ENCODE measurements at regions of chr15 and their contacts with region 1.

Region 1: DNA sequence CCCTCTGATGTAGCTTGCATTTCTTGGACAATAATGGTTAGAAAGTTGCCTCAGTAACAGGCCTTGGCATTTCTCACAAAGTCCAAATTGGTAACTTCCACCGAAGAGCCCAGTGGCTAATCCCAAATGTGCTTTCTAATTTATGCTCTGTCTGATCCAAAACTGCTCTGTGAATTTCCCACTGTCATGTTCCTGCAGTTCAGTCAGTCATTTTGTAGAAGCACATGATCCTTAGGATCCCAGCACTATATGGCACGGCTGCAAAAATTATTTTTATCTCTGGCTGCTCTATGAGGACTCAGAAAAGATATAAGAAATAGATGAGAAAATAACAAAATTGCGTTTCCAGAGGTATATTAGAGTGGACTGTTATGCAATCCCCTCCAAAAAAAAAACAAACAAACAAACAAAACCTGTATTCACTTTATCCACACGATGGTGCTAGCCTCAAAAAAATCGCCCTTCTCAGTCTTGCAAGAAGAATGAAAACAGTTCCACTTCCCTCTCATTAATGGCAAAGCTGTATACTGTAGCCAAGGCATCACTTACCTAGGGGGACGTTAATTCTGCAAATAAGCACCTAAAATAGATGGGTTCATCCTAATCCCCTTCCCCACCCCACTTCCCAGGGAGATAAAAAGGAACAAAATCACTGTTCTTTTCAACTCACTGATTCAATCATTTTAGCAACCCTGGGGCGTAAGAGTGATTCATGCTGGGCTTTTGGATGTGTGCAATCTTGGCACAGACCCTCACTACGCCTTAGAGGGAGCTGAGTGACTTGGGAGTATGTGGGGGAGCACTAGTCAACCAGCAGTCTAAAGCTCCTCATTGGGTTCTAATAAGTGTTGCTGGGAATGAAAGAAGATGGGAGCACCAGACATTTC is 61.3 kb downstream of the TMCO5A start:
- DNase-seq: peak; percentile 82
- H3K4me3 Mint-ChIP-seq: no peak overlapping the region
- H3K27ac Mint-ChIP-seq: no peak overlapping the region
- H3K4me1 Mint-ChIP-seq: peaks cover 13% of the 10 kb centered on the region
- H3K27me3 Mint-ChIP-seq: peaks cover 26% of the 10 kb centered on the region
- CTCF ChIP-seq: peak; percentile 73

Region 2: GRCh38 chr15:37981775-37982174 is 13.9 kb before region 1 on chr15:
- CTCF ChIA-PET with region 1: interaction called, 34 read pairs
- POLR2A ChIA-PET with region 1: no interaction called
- intact Hi-C with region 1: no loop called
- DNase-seq: peak; percentile 47
- H3K4me3 Mint-ChIP-seq: no peak overlapping the region
- H3K27ac Mint-ChIP-seq: no peak overlapping the region
- H3K4me1 Mint-ChIP-seq: no peaks in the 10 kb centered on the region
- H3K27me3 Mint-ChIP-seq: no peaks in the 10 kb centered on the region
- CTCF ChIP-seq: peak; percentile 20

Region 3: GRCh38 chr15:38012894-38013293 is 17.2 kb after region 1 on chr15:
- CTCF ChIA-PET with region 1: interaction called, 10 read pairs
- POLR2A ChIA-PET with region 1: no interaction called
- intact Hi-C with region 1: no loop called
- DNase-seq: no peak
- H3K4me3 Mint-ChIP-seq: no peak overlapping the region
- H3K27ac Mint-ChIP-seq: no peak overlapping the region
- H3K4me1 Mint-ChIP-seq: no peaks in the 10 kb centered on the region
- H3K27me3 Mint-ChIP-seq: no peaks in the 10 kb centered on the region
- CTCF ChIP-seq: no peak

Region 4: DNA sequence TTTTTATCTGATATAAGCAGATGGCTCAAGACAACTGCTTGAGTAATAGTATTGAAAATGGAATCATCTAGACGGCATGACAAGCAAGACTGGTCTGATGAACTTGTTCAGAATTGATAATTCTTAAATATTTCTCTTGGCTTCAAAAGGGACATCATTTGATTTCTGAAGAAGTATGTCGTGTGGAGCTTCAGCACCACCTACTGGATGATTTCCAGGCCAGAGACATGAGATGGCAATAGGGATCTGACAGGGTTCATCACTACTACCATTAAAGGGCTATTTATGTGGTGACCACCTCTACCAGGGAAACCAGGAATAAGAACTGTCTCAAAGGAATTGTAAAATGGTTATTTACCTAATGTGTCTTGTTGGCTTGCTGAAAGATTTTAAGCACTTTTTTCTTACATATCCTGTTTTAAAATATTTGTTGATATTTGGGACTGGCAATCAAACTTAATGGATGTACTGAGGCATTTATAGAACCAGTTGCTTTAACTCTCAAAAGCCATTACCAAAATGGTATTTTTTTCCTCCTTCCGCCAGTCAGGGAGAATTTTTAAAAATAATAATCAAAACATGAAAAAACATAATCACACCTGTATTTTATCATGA is 358.7 kb after region 1 on chr15:
- CTCF ChIA-PET with region 1: interaction called, 51 read pairs
- POLR2A ChIA-PET with region 1: interaction called, 7 read pairs
- intact Hi-C with region 1: loop called (anchors 1 kb)
- DNase-seq: peak; percentile 78
- H3K4me3 Mint-ChIP-seq: no peak overlapping the region
- H3K27ac Mint-ChIP-seq: no peak overlapping the region
- H3K4me1 Mint-ChIP-seq: no peaks in the 10 kb centered on the region
- H3K27me3 Mint-ChIP-seq: no peaks in the 10 kb centered on the region
- CTCF ChIP-seq: peak; percentile 63

Region 5: DNA sequence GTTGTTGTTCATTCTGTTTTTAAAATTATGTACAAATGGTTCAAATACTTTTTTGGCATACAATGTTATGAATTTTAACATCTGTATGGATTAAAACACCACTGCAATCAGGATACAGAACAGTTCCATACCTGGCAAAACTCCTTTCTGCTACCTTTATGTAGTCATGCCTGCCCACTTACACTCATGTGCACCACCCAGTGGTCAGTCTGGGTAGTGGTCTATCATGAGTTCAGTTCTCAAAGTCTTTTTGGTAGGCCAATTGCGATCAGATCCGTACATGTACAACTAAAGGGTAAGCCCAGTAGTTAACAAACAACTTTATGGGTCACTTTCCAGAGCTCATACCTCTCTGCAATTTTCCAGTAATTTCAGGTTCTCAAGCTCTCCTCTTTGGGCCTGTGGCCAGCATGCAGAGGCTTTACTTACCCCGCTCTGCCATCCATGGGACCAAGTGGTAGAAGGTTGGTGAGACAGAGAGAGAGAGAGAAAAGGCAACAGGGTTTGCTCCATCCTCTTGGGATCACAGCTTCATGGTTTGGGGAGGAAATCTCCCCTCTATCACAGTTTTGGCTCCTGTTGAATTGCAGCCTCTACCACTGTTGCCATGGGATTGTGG is 394.3 kb after region 1 on chr15:
- CTCF ChIA-PET with region 1: interaction called, 53 read pairs
- POLR2A ChIA-PET with region 1: no interaction called
- intact Hi-C with region 1: loop called (anchors 2 kb)
- DNase-seq: peak; percentile 77
- H3K4me3 Mint-ChIP-seq: no peak overlapping the region
- H3K27ac Mint-ChIP-seq: no peak overlapping the region
- H3K4me1 Mint-ChIP-seq: no peaks in the 10 kb centered on the region
- H3K27me3 Mint-ChIP-seq: no peaks in the 10 kb centered on the region
- CTCF ChIP-seq: peak; percentile 67

Region 6: DNA sequence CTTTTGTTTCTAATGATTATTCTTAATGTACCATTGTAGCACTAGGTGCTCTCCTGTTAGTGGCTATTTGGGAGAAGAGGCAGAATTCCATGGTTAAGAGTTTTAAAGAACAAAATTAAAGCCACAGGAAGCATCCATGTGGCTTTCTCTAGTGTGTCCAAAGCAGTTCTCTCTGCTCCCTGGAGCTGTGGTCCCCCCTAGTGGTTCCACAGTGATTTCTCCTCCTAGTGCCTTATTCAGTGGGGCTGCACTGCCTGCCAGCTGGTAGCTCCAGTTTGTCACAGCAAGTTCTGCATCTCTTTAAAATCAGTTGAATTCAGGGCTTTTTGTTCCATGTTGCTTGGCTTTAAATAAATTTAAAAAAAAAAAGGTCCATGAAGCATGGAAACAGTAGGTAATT is 418.7 kb after region 1 on chr15:
- CTCF ChIA-PET with region 1: interaction called, 4 read pairs
- POLR2A ChIA-PET with region 1: no interaction called
- intact Hi-C with region 1: loop called (anchors 1 kb)
- DNase-seq: peak; percentile 70
- H3K4me3 Mint-ChIP-seq: no peak overlapping the region
- H3K27ac Mint-ChIP-seq: no peak overlapping the region
- H3K4me1 Mint-ChIP-seq: no peaks in the 10 kb centered on the region
- H3K27me3 Mint-ChIP-seq: peaks cover 17% of the 10 kb centered on the region
- CTCF ChIP-seq: peak; percentile 80

Region 7: DNA sequence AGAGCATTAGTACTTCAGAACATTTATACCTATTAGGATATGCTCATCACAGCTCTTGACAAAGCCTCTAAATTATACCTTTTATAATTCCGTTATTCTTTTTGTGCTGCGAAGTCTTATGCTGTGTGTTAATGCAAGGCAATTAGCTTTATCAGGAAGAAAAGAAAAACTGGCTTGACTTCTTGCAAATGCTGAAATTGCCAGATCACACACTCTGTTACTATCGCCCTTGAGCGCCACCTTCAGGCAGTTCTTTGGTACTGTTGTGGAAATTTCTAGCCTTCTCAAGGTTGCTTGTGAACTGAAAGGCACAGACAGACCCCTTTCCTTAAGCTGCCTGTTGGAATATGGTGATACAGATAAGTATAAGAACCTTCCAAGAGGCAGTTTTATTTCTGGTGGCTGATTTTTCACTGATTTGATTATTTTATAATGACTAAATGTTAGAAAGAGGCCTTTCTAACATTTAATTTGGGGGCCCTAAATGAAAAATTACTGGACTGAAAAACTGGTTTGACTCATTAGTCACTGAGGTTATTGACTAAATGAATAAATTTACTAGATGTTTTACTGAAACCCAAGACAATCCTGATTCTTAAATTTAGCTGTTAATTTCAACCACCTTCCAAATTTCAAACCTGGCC is 695.1 kb after region 1 on chr15:
- CTCF ChIA-PET with region 1: interaction called, 12 read pairs
- POLR2A ChIA-PET with region 1: no interaction called
- intact Hi-C with region 1: no loop called
- DNase-seq: peak; percentile 81
- H3K4me3 Mint-ChIP-seq: no peak overlapping the region
- H3K27ac Mint-ChIP-seq: no peak overlapping the region
- H3K4me1 Mint-ChIP-seq: peaks cover 6% of the 10 kb centered on the region
- H3K27me3 Mint-ChIP-seq: no peaks in the 10 kb centered on the region
- CTCF ChIP-seq: peak; percentile 78